ENCODE measurements at regions of chr1 and their contacts with region 1.

Region 1: GRCh38 chr1:2525920-2526823 is at the start of gene PANK4:
- DNase-seq: peak; percentile 98
- ATAC-seq: peak; percentile 92
- H3K4me3 ChIP-seq: peak within 1 kb of the TSS; percentile 93
- H3K27ac ChIP-seq: peak within 1 kb of the TSS; percentile 43
- H3K4me1 ChIP-seq: peaks cover 43% of the 10 kb centered on the region
- H3K27me3 ChIP-seq: no peaks in the 10 kb centered on the region
- CTCF ChIP-seq: no peak
- total RNA-seq, gene PANK4: 69.4 and 86.9 TPM in 2 replicates

Region 2: DNA sequence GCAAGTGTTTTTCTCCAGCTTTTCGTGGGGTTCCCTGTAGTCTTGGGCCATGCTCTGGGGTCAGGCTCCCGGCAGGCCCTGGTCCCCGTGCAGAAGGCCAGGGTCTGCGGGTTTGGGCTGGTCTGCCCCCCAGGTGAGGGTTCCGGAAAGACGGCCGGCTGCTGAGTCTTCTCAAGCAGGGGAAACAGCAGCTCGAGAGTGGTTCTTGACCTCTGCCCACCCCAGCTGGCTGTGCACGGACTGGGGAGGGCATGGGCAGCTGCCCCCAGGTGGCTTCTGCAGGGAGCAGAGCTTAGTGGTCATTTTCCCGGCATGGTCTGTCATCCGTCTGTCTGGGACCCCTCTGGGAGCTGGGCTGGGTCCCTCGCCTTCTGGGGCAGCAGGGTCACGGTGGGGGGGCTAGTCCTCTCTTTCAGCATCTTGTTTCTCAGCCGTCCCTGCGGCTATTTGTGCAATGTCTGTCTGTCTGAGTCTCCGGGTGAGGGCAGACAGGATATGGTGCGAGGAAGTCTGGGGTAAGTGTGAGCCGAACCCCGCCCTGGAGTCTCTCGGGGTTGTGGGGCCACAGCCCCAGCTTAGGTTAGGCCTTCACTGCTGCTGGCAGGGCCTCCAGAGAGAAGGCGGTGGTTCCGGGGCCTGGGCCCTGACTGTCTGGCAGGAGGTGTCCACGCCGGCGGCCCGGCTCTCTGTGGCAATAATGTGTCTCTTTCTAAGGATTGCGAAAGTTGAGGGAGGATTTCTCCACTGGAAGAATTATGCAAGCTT is 292.0 kb before region 1 on chr1:
- CTCF ChIA-PET with region 1: no interaction called
- POLR2A ChIA-PET with region 1: interaction called, 11 read pairs
- intact Hi-C with region 1: no loop called
- DNase-seq: peak; percentile 32
- ATAC-seq: no peak
- H3K4me3 ChIP-seq: no peak overlapping the region
- H3K27ac ChIP-seq: no peak overlapping the region
- H3K4me1 ChIP-seq: peaks cover 32% of the 10 kb centered on the region
- H3K27me3 ChIP-seq: no peaks in the 10 kb centered on the region
- CTCF ChIP-seq: no peak

Region 3: DNA sequence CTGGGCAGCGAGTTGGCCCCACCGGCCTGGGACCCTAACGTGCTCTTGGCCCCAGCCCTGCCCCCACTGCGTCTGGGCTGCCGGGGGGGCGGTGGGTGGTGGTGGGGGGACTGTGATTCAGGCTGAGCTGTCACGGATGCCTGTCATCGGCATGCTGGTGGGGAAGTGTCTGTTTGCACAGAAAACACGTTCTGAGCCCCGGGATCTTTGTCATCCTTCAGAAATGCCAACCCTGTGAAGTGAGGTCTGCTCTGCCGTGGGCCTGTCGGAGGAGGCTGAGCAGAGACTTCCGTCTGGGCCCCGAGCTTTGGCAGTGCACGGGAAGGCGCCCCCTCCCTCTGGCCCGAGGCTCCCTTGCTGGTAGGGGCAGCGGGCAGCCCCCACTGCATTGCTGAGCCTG is 74.4 kb before region 1 on chr1:
- CTCF ChIA-PET with region 1: no interaction called
- POLR2A ChIA-PET with region 1: no interaction called
- intact Hi-C with region 1: loop called (anchors 2 kb)
- DNase-seq: peak; percentile 99
- ATAC-seq: peak; percentile 83
- H3K4me3 ChIP-seq: peak overlapping the region; percentile 59
- H3K27ac ChIP-seq: peak overlapping the region; percentile 96
- H3K4me1 ChIP-seq: peaks cover 59% of the 10 kb centered on the region
- H3K27me3 ChIP-seq: no peaks in the 10 kb centered on the region
- CTCF ChIP-seq: no peak

Region 4: DNA sequence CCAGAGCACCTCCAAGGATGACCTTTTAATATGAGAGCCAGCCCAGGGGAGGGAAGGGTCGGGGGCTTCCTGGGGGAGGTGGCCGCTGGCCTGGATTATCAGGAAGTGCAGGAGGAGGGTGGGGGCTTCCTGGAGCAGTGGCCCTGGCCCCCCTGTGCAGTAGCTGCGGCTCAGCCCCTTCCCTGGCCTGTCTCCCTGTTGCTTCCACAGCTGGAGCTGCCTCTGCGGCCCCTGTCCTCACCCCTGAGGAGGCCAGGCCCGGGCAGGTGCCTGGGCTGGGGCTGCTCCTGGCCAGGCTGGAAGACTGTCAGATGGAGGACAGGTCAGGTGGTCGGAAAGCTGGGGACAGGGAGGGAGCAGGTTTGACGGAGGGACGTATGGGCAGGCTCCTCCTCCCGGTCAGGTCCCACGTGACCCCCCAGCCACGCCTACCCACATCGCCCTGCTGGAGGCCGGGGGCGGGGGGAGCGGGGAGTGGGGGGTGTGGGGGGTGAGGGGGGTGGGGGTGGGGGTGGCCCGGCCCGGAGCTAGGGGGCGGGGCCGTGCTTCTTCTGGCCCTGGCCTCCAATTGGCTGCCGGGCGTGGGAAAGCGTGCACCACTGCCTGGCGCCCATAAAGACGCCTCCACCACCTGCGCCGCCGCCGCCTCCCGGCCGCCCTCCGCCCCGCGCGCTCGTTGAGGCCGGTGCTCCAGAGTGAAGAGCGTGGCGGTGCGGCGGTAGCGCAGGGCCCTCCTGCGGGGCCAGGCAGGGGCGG is 19.8 kb after region 1 on chr1:
- CTCF ChIA-PET with region 1: interaction called, 15 read pairs
- POLR2A ChIA-PET with region 1: interaction called, 10 read pairs
- intact Hi-C with region 1: loop called (anchors 1 kb)
- DNase-seq: peak; percentile 95
- ATAC-seq: peak; percentile 64
- H3K4me3 ChIP-seq: peak overlapping the region; percentile 69
- H3K27ac ChIP-seq: peak overlapping the region; percentile 64
- H3K4me1 ChIP-seq: peaks cover 22% of the 10 kb centered on the region
- H3K27me3 ChIP-seq: no peaks in the 10 kb centered on the region
- CTCF ChIP-seq: no peak

Region 5: DNA sequence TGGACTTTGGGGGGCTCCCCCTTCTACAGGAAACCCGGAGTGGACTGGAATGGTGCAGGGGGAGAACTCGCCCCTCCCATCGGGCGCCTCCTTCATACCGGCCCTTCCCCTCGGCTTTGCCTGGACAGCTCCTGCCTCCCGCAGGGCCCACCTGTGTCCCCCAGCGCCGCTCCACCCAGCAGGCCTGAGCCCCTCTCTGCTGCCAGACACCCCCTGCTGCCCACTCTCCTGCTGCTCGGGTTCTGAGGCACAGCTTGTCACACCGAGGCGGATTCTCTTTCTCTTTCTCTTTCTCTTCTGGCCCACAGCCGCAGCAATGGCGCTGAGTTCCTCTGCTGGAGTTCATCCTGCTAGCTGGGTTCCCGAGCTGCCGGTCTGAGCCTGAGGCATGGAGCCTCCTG is 30.1 kb after region 1 on chr1 and contains the start of gene TNFRSF14:
- CTCF ChIA-PET with region 1: no interaction called
- POLR2A ChIA-PET with region 1: interaction called, 11 read pairs
- intact Hi-C with region 1: no loop called
- DNase-seq: peak; percentile 51
- ATAC-seq: peak; percentile 75
- H3K4me3 ChIP-seq: peak within 1 kb of the TSS; percentile 83
- H3K27ac ChIP-seq: no peak within 1 kb of the TSS
- H3K4me1 ChIP-seq: peaks cover 15% of the 10 kb centered on the region
- H3K27me3 ChIP-seq: no peaks in the 10 kb centered on the region
- CTCF ChIP-seq: no peak
- total RNA-seq, gene TNFRSF14: 21.1 and 25.5 TPM in 2 replicates

Region 6: DNA sequence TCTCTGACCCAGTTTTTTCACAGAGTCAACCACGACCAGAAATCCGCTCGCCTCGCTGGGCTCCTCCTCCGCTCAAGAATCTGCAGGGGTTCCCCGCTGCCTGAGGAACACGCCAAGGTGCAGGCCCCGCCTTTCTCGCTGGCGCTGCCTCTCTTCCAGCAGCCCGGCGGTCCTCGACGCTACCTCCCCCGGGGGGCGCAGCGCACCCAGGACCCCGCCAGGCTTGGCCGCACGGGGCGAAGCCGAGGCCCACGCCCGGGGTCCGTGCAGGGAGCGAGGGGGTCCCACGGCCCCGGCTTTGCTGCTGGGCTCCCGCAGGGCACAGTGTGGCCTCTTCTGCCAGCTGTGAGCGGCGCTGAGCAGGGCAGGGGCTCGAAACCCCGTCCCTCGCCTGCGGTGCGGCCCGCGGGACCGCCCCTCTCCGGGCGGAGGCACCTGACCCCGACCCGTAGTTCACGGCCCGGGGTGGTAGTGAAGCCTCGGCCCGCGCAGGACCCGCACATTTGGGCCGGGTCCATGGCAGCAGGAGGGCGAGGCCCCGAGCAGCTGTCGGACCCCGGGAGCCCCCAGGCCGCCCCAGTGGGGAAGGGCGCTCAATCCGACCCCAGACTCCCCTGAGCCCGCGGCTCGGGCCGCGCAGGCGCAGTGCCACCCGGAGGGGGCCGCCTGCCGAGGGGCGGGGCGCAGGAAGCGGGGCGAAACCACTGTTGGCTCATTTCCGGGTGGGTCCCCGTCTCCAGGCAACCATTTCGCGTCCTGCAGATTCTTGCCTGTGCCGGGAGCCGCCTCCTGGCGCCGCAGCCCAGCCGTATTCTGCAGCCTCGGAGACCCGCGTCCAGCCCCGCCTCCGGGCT is 116.6 kb after region 1 on chr1:
- CTCF ChIA-PET with region 1: no interaction called
- POLR2A ChIA-PET with region 1: no interaction called
- intact Hi-C with region 1: no loop called
- DNase-seq: peak; percentile 96
- ATAC-seq: peak; percentile 84
- H3K4me3 ChIP-seq: peak overlapping the region; percentile 89
- H3K27ac ChIP-seq: 0 out of 2 replicates have a peak overlapping the region, but pooled peaks have one; percentile 13
- H3K4me1 ChIP-seq: peaks cover 8% of the 10 kb centered on the region
- H3K27me3 ChIP-seq: peaks cover 15% of the 10 kb centered on the region
- CTCF ChIP-seq: no peak

Measured in PC-3 (cell line).